Endothelial cell of umbilical vein (primary cell): ENCODE measurements at regions of chr17 and their contacts with region 1.

Region 1: DNA sequence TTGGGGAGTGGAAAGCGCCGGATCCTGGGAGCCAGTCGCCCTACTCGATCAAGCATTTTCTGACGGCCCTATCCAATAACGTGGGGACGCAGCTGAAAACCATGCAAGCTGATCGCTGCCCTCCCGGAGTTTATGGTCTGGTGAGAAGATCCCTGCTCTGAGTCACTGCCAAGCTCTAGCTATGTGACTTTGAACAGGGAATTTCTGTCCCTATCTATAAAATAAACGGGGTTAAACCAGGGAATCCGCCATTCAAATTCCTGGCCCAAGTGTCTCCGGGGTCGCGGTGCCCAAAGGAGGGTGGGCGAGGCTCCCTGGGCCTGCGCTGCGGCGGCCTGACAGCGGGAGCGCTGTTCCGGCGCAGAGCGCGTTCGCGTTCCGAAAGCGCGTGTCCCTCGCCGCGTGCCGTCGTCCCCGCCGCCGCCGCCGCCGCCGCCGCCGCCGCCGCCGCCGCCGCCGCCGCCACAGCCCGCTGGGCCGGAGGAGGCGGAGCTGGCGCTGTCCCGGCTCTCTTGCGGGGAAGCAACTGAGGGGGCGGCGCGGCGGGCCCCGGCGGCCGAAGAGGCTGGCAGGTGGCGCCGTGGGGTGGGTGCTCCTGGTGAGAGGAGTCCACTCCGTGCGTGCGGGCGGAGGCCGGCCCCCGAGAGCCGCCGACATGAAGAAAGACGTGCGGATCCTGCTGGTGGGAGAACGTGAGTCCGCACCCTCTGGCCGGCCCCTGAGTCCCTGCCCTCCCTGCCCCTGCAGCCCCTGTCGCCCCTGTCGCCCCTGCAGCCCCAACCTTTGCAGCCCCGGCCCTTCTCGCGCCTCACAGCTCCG is at the start of gene RHOT1:
- DNase-seq: peak; percentile 83
- H3K4me3 ChIP-seq: peak within 1 kb of the TSS; percentile 78 to 98 (median 95)
- H3K27ac ChIP-seq: peak within 1 kb of the TSS; percentile 64
- H3K4me1 ChIP-seq: peaks cover 15% of the 10 kb centered on the region
- H3K27me3 ChIP-seq: no peaks in the 10 kb centered on the region
- CTCF ChIP-seq: peak; percentile 59 to 68
- POLR2A ChIP-seq: peak; percentile 59
- total RNA-seq, gene RHOT1: 22.0 and 23.5 TPM in 2 replicates

Region 2: DNA sequence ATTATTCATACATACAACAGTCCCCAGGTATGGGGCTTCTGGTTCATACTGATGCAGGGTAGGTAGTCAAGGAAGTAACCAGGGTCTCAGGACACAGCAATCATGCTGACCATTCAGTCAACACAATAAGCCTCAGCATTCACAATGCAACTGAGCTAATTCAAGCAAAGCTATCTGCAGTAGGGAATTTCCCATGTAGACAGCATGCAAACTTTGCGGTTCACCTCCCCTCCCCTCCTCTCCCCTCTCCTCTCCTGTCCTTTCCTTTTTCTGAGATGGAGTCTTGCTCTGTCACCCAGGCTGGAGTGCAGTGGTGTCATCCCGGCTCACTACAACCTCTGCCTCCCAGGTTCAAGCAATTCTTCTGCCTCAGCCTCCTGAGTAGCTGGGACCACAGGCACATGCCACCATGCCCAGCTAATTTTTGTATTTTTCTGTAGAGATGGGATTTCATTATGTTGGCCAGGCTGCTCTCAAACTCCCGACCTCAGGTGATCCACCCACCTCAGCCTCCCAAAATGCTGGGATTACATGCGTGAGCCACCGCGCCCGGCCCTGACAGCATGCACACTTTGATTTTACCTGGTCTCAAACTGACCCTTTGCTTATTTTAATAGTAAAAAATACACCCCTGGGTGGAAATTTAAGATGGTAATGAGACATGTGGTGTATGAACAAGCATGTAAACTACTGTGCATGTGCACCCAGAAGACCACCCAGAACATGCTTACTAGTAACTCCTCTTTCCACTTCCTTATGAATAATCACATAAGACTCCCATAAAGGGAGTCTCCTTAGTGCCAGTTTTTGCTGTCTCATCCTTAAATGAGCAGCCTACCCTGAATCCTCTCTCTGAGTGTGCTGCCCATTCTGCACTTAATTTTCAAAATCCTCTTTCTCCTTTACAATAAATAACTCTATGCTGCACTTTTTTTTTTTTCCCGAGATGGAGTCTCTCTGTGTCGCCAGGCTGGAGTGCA is 1180.7 kb before region 1 on chr17:
- CTCF ChIA-PET with region 1: no interaction called
- POLR2A ChIA-PET with region 1: no interaction called
- dilution Hi-C with region 1: no loop called
- intact Hi-C with region 1: no loop called
- DNase-seq: no peak
- H3K4me3 ChIP-seq: no peak overlapping the region
- H3K27ac ChIP-seq: no peak overlapping the region
- H3K4me1 ChIP-seq: no peaks in the 10 kb centered on the region
- H3K27me3 ChIP-seq: peaks cover 3 to 6% of the 10 kb centered on the region in 2 experiments
- CTCF ChIP-seq: no peak
- POLR2A ChIP-seq: no peak

Region 3: GRCh38 chr17:31549525-31550388 is 592.5 kb before region 1 on chr17:
- CTCF ChIA-PET with region 1: no interaction called
- POLR2A ChIA-PET with region 1: no interaction called
- dilution Hi-C with region 1: no loop called
- intact Hi-C with region 1: no loop called
- DNase-seq: peak; percentile 92
- H3K4me3 ChIP-seq: peak overlapping the region; percentile 54 to 66 (median 63)
- H3K27ac ChIP-seq: peak overlapping the region; percentile 2
- H3K4me1 ChIP-seq: peaks cover 3% of the 10 kb centered on the region
- H3K27me3 ChIP-seq: peaks cover 0 to 4% of the 10 kb centered on the region in 2 experiments
- CTCF ChIP-seq: no peak
- POLR2A ChIP-seq: peak; percentile 17

Region 4: DNA sequence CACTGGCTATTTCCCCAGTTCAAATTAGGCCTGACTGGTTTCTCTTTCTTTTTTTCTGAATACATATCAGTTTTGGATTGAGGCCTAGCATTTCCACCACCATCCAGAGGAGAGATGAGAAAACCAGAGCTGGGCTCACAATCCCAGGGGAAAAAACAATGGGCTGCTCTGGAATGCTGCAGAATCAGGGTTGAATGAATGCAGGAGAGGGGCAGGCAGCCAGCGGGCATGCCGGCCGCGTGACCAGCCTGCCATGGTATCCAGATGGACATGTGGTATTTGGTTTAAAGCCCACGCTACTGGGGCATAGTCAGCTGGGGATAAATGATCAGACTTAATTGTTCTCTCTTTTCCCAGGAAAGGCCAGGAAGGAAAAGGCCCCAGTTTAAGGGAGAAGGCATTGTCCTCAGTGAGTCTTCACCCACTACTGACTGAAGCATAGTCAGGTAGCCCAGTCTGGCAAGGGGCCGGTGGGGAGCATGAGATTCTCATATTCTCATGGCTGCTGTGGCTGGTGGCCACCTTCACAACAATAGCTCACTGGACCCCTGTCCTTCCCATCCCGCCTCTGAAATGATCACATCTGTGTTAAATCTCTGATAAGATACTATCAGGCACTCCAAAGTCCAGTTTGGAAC is 38.7 kb before region 1 on chr17:
- CTCF ChIA-PET with region 1: interaction called, 12 read pairs
- POLR2A ChIA-PET with region 1: no interaction called
- dilution Hi-C with region 1: no loop called
- intact Hi-C with region 1: no loop called
- DNase-seq: peak; percentile 74
- H3K4me3 ChIP-seq: no peak overlapping the region
- H3K27ac ChIP-seq: no peak overlapping the region
- H3K4me1 ChIP-seq: peaks cover 17% of the 10 kb centered on the region
- H3K27me3 ChIP-seq: no peaks in the 10 kb centered on the region
- CTCF ChIP-seq: no peak
- POLR2A ChIP-seq: no peak

Region 5: DNA sequence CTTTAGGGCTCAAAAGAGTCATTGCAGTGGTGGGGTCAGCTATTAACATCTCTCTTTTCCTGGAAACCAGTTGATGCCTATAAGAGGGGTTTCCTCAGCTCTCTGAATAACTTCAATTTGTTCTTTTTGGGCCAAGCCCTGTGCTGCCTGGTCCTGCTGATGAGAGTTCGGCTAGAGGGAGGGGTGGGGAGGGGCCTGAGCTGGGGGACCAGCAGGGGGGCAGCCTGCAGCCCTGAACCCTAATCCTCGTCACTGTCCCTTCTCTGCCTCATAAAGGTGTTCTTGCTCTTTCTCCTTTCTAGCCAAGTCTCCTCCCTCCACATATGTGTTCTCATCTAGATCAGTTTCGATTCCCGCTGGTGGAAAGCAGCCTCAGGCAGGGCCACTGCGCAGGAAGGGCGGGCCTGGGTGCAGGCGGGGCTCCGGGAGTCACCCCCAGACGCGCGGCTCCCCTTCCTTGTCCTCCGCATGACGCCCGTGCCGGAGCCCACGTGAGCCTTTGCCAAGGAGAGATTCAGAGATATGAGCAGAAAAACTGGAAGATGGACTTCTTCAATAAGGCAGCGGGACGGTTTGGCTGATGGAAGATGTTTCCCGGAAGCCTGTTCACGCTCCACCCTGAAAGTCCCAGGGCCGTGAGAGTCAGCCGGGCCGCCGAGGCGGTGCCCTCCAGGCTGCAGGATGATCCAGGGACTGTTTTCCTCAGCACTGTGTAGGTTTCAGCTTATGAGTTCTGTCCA is 14.9 kb before region 1 on chr17:
- CTCF ChIA-PET with region 1: interaction called, 10 read pairs
- POLR2A ChIA-PET with region 1: no interaction called
- dilution Hi-C with region 1: no loop called
- intact Hi-C with region 1: no loop called
- DNase-seq: peak; percentile 55
- H3K4me3 ChIP-seq: peak overlapping the region; percentile 38 to 78 (median 77)
- H3K27ac ChIP-seq: peak overlapping the region; percentile 21
- H3K4me1 ChIP-seq: peaks cover 4% of the 10 kb centered on the region
- H3K27me3 ChIP-seq: no peaks in the 10 kb centered on the region
- CTCF ChIP-seq: no peak
- POLR2A ChIP-seq: peak; percentile 81